Mucosa of descending colon (tissue), 3 donors: ENCODE measurements at regions of chr7 and their contacts with region 1.

Region 1: DNA sequence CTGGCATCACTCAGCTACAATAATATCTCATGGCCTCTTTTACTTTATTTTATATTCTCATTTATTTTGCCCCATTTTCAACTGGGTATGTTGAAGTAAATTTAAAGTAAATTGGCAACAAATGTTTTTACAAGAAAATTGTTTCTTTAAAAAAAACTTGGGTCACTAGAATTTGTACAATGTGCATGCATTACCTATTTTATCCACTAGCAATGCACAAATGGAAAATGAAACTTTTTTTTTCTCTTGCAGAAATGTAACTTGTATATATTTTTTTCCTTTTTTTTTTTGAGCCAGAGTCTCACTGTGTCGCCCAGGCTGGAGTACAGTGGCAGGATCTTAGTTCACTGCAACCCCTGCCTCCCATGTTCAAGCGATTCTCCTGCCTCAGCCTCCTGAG is 10.3 kb upstream of the H2AZ2 start:
- DNase-seq: no peak
- ATAC-seq: no peak
- H3K4me3 ChIP-seq: no peak overlapping the region
- H3K4me1 ChIP-seq: peaks cover 4% of the 10 kb centered on the region
- CTCF ChIP-seq: no peak

Region 2: GRCh38 chr7:44921607-44922359 is 63.6 kb after region 1 on chr7:
- intact Hi-C with region 1: loop called (anchors 10 kb)
- DNase-seq: peak; percentile 90 to 99 (median 94)
- ATAC-seq: peak; percentile 95
- H3K4me3 ChIP-seq: no peak overlapping the region
- H3K4me1 ChIP-seq: no peaks in the 10 kb centered on the region
- CTCF ChIP-seq: peak; percentile 84

Region 3: GRCh38 chr7:44962483-44963251 is 104.5 kb after region 1 on chr7:
- intact Hi-C with region 1: no loop called
- DNase-seq: no peak
- ATAC-seq: peak; percentile 49
- H3K4me3 ChIP-seq: no peak overlapping the region
- H3K4me1 ChIP-seq: peaks cover 12% of the 10 kb centered on the region
- CTCF ChIP-seq: no peak

Region 4: DNA sequence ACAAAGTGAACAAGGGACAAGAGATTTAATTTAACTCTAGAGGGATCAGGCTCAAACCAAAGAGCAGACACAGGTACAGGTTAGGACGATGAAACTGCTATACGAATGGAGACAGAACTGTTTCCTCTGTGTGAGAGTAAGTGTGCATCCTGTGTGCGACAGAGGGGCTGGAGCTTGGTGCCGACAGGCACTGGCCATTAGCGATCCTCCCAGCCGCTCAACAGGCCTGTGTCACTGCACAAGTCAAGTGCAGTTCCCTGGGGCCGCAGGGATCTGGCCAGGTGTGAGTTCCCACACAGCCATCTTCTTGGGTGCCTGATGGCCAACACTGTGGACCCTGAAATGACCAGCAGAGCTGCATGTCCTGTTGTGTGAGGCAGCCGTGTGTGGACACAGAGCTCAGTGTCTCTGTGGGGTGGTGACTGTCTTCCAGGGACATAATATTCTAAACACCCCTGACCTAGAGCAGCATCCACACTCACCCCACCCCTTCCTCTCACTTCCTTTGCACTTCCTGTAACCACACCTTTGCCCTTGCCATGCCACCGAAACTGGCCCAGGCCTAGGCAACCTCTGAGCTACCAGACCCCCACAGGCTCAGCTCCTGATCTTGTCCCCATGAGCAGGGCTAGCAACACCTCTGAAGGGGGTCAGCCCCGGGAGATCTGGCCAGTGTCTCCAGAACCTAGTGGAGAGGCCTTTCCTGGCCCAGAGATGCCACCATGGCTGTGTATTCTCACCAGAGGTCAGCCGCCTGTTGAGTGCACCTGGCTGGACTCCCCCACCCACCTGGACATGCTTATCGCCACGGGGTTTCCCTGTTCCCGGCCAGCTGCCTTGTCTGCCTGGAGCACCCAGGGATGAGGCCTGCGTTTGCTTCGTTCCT is 265.1 kb after region 1 on chr7:
- intact Hi-C with region 1: loop called in 1 of 2 experiments (anchors 10 kb)
- DNase-seq: no peak
- ATAC-seq: no peak
- H3K4me3 ChIP-seq: no peak overlapping the region
- H3K4me1 ChIP-seq: no peaks in the 10 kb centered on the region
- CTCF ChIP-seq: no peak

Region 5: DNA sequence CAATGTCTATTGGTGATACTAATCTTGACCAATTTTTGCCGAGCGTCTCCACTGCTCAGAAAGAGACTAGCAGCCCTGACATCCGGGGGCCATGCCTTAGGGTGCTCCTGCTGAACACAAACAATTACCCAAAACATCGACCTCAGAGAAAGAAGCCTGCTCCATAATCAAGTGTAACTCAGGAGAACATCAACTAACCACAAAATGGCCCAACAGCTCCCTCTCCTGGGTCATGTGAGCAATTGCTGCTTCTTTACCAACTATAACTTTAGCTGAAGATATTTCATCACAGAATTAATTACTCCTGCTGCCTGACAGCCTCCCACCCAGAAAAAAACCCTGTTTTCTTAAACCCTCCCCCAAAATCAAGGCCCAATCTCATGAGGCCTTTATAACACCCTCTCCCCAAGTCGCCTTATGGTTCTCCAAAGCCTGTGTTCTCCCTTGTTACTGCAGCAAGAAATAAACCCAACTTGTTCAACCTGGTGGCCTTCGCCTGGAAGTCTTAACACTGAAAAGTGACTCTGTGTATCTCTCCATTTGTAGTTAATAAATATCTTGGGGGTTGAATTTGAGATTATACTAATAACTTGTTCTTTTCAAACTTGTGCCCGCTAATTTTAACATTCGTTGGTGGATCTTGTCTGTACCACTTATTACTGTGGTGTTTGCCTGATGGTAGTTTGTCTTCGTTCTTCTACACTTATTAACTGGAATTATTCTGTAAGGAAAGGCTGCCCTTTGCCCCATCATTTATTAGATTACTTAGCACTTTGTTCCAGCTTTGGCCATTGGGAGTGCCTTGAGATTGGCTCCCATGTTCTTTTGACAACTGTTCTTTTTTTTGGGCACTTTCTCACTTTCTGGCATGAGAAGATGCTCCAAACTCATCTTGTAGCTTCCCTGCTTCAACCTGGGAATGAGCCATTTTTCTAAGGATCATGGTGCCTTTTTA is 278.2 kb after region 1 on chr7:
- intact Hi-C with region 1: loop called in 1 of 2 experiments (anchors 5 kb)
- DNase-seq: peak in 1 of 3 donors; percentile 37
- ATAC-seq: peak; percentile 81
- H3K4me3 ChIP-seq: no peak overlapping the region
- H3K4me1 ChIP-seq: peaks cover 3% of the 10 kb centered on the region
- CTCF ChIP-seq: peak; percentile 71

Region 6: GRCh38 chr7:45292481-45292880 is 434.3 kb after region 1 on chr7:
- intact Hi-C with region 1: no loop called
- DNase-seq: no peak
- ATAC-seq: no peak
- H3K4me3 ChIP-seq: no peak overlapping the region
- H3K4me1 ChIP-seq: no peaks in the 10 kb centered on the region
- CTCF ChIP-seq: no peak